Posterior vena cava (tissue), 2 donors: ENCODE measurements at regions of chr6 and their contacts with region 1.

Region 1: GRCh38 chr6:105620878-105621277 is 218.0 kb upstream of the PREP start:
- DNase-seq: no peak

Region 2: GRCh38 chr6:104987218-104987617 is 633.7 kb before region 1 on chr6:
- intact Hi-C with region 1: loop called in 1 of 2 experiments (anchors 10 kb)
- DNase-seq: no peak

Region 3: DNA sequence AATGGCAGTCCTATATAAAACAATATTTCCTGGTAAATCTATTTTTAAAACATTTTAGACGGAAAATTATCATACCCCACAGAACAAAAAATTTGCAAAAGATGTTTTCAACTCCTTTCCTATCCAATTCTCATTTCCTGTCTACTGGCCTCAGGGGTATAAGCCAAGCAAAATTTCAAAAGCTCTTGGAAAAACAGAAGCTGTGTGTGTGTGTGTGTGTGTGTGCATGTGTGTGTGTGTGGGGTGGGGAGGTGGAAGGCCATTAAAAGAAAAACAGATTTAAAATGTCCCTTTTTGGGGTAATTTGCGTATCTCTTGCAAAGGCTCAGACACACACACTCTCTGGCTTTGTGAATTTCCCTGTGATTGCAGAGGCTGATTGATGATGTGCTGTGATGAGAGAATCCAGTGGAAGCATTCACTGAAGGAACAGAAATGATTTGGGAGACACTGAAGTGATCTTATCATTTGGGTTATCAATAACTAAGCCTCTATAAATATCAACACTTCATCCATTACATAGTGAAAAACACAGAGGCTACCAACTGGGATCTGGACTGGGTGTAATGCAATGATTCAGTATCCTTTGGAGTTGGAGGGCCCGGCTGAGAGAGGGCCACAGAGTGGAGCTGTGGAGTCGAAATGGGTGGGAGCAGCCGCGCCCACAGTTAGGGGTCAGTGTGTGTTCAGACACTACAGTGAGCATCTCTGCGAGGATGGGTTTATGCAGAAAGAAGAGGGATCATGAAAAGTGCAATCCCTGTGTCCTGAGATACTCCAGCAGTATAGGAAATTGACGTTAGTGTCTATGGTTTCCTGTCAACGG is 111.2 kb before region 1 on chr6:
- intact Hi-C with region 1: no loop called
- DNase-seq: no peak